ENCODE measurements at regions of chr17 and their contacts with region 1.

Region 1: GRCh38 chr17:50638851-50639767 is 4.4 kb downstream of the ABCC3 start:
- DNase-seq: peak; percentile 93
- H3K4me3 ChIP-seq: no peak overlapping the region
- H3K27ac ChIP-seq: peak overlapping the region; percentile 72
- H3K4me1 ChIP-seq: peaks cover 46% of the 10 kb centered on the region
- H3K27me3 ChIP-seq: no peaks in the 10 kb centered on the region
- CTCF ChIP-seq: no peak
- POLR2A ChIP-seq: no peak

Region 2: DNA sequence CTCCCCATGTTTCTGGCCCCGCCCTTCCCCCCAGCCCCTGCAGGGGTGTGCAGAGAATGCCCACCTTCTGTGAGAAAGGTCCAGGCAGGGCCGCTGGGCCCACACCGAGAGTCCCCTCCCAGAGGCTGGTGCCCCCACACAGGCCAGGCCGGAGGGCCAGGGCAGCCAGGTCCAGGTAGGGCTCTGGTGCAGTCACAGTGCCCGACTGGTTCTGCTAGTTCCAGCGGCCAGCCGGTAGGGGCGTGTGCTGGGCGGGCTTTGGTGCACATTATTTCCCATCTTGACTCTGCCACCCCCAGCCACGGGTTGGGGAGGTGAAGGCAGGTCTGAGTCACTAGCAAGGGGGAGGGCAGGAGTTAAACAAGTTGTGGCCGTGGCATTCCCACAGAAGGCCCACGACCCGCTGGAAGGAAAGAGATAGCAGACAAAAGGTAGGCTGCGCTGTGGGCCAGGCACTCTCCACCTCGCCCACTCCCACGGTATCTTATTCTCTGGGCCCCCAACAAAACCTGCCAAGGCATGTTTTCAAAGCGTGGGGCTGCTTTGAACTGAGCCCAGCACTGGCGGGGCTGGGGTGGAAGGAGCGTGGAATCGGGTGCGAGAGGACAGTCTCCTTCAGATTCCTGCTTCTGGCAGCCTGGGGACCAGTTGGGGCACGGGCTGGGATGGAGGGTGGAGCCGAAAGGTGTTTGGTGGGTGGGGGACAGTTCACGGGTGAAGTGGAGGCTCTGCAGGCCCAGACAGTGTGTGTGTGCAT is 104.7 kb before region 1 on chr17:
- CTCF ChIA-PET with region 1: no interaction called
- POLR2A ChIA-PET with region 1: no interaction called
- dilution Hi-C with region 1: no loop called
- intact Hi-C with region 1: no loop called
- DNase-seq: no peak
- H3K4me3 ChIP-seq: no peak overlapping the region
- H3K27ac ChIP-seq: no peak overlapping the region
- H3K4me1 ChIP-seq: no peaks in the 10 kb centered on the region
- H3K27me3 ChIP-seq: peaks cover 13 to 26% of the 10 kb centered on the region in 2 experiments
- CTCF ChIP-seq: peak; percentile 12 to 54
- POLR2A ChIP-seq: no peak

Region 3: DNA sequence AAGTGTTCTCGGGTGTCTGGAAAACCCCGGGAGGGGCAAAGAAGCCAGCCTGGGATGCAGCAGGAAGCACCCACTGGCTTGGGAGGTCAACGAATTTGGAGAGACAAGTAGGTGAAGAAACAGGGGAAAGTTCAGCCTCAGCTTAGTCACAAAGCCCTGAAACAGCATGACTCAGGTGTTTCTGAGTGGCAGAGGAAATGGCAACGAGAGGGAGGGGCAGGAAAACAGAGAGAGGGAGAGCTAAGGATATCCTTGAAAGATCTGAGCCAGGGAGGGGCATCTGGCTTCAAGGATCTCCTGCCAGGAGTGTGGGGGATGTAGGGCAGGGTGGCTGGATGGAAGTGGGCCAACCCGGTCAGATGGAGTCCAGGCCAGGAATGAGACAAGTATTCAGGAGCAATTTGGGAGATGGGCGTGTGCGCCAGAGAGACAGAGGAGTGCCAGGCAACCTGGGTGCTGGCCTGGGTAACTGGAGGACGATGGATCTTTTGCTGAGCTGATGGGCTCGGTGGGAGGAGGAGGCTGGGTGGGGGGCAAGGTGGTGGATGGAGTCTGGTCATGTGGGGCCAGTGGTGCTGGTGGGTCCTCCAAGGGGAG is 22.8 kb after region 1 on chr17:
- CTCF ChIA-PET with region 1: interaction called, 29 read pairs
- POLR2A ChIA-PET with region 1: interaction called, 23 read pairs
- dilution Hi-C with region 1: no loop called
- intact Hi-C with region 1: loop called (anchors 1 kb)
- DNase-seq: peak; percentile 86
- H3K4me3 ChIP-seq: no peak overlapping the region
- H3K27ac ChIP-seq: peak overlapping the region; percentile 90
- H3K4me1 ChIP-seq: peaks cover 31% of the 10 kb centered on the region
- H3K27me3 ChIP-seq: no peaks in the 10 kb centered on the region
- CTCF ChIP-seq: no peak
- POLR2A ChIP-seq: no peak

Region 4: GRCh38 chr17:50668025-50668837 is 29.1 kb after region 1 on chr17:
- CTCF ChIA-PET with region 1: interaction called, 21 read pairs
- POLR2A ChIA-PET with region 1: no interaction called
- dilution Hi-C with region 1: no loop called
- intact Hi-C with region 1: no loop called
- DNase-seq: peak; percentile 49
- H3K4me3 ChIP-seq: no peak overlapping the region
- H3K27ac ChIP-seq: peak overlapping the region; percentile 50
- H3K4me1 ChIP-seq: peaks cover 14% of the 10 kb centered on the region
- H3K27me3 ChIP-seq: no peaks in the 10 kb centered on the region
- CTCF ChIP-seq: no peak
- POLR2A ChIP-seq: peak; percentile 30

Region 5: DNA sequence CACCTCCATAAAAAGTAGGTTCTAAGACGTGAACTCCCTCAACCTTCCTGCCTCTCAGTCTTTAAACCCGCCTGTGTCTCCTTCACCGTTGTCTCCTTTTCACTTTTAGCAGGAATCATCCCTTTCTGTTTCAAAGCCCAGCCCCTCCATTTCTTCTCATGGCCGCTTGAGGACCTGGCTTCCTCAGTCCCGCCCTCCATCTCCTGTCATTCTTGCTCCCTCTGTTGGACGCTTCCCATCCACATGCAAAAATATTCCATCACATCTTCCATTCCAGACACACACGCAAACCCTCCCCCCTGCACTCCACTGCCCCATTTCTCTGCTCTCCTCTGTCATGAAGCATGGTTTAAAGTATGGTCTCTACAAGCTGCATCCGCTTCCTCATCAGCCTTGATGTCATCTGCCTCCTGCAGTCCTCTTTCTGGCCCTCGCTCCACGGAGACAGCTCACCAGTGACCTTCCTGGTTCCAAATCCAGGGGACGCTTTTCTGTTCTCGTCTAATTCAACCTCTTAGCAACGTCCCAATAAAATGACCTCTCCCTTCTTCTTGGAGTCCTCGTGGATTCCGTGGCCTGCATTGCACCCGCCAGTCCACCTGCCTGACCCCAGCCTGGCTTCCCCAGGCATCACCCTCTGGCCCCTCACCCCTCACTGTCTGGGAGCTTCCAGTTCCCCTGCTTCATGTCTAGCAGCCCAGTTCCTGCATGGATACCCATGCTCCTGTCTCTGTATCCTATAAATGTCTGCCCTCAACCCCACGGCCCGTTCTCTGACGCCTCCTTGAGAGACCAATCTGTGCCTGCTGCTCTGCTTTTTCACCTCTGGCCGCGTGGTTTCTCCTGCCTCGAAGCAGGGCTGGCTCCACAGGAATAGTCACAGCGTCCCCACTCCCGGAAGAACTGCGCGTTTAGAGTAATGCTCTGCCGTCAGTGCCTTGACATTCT is 42.4 kb after region 1 on chr17:
- CTCF ChIA-PET with region 1: interaction called, 10 read pairs
- POLR2A ChIA-PET with region 1: no interaction called
- dilution Hi-C with region 1: no loop called
- intact Hi-C with region 1: no loop called
- DNase-seq: peak; percentile 83
- H3K4me3 ChIP-seq: no peak overlapping the region
- H3K27ac ChIP-seq: no peak overlapping the region
- H3K4me1 ChIP-seq: peaks cover 3% of the 10 kb centered on the region
- H3K27me3 ChIP-seq: no peaks in the 10 kb centered on the region
- CTCF ChIP-seq: peak; percentile 71 to 77
- POLR2A ChIP-seq: no peak

Measured in endothelial cell of umbilical vein (primary cell).